Right cardiac atrium (tissue), 5 donors: ENCODE measurements at regions of chrX and their contacts with region 1.

Region 1: GRCh38 chrX:68929332-68930150 is 100.7 kb downstream of the EFNB1 start:
- DNase-seq: peak in 1 of 3 donors; percentile 60
- ATAC-seq: peak in 1 of 2 donors; percentile 67
- H3K4me3 ChIP-seq: no peak overlapping the region
- H3K27ac ChIP-seq: peak overlapping the region; percentile 70
- H3K4me1 ChIP-seq: peaks cover 25% of the 10 kb centered on the region
- H3K27me3 ChIP-seq: no peaks in the 10 kb centered on the region

Region 2: DNA sequence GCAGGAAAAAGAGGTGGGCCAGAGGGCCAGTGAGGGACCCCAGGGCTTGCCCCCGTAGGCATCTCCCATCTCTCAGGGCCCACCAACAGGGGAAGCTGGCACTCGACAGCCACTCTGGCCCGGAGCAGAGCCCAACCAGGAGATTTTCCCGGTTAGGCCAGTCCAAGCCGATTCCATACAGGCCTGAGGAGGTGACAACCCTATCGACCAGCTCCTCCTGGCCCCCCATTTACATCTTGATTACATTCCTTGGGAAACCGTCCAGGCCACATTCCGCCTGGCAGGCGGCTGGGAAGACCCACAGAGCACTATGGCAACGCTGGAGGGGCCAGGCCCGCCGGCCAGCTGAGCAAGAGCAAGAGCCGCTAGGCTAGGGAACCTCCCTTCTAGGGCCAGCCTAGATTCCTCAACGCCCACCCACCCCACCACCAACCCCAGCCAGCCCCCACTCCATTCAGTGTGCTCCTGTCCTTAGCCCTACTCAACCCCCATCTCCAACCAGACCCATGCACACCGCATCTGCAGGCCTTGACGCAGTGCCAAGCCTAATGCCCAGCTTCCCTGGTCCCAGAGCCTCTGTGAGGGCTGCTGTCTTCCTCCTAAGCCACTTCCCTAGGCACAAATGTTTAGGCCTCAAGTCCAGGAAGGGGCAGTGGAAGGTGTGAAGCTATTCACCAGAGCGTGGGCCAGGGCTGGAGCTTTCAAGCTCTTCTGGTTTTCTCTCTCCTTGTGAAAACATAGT is 60.5 kb after region 1 on chrX:
- intact Hi-C with region 1: loop called in 2 of 4 experiments (anchors 10 kb)
- DNase-seq: peak; percentile 50 to 80 (median 76)
- ATAC-seq: peak; percentile 83 to 86
- H3K4me3 ChIP-seq: no peak overlapping the region
- H3K27ac ChIP-seq: peak overlapping the region; percentile 40
- H3K4me1 ChIP-seq: peaks cover 13% of the 10 kb centered on the region
- H3K27me3 ChIP-seq: no peaks in the 10 kb centered on the region